Naive thymus-derived CD4-positive, alpha-beta T cell (primary cell): ENCODE measurements at regions of chr7 and their contacts with region 1.

Region 1: GRCh38 chr7:17234398-17235031 is 63.9 kb upstream of the AHR start:
- DNase-seq: peak in 8 of 9 donors; percentile 48 to 85 (median 69)
- ATAC-seq: peak; percentile 92
- H3K4me3 ChIP-seq: peak overlapping the region; percentile 47
- H3K4me3 Mint-ChIP-seq: peak overlapping the region; percentile 53 to 92 (median 76)
- H3K27ac ChIP-seq: peak overlapping the region; percentile 69
- H3K27ac Mint-ChIP-seq: peak overlapping the region; percentile 84 to 100 (median 96)
- H3K4me1 ChIP-seq: peaks cover 22 to 24% of the 10 kb centered on the region in 2 donors
- H3K4me1 Mint-ChIP-seq: peaks cover 19 to 50% (median 37%) of the 10 kb centered on the region in 7 donors
- H3K27me3 ChIP-seq: no peaks in the 10 kb centered on the region
- H3K27me3 Mint-ChIP-seq: peaks cover 0 to 4% (median 0%) of the 10 kb centered on the region in 5 donors

Region 2: DNA sequence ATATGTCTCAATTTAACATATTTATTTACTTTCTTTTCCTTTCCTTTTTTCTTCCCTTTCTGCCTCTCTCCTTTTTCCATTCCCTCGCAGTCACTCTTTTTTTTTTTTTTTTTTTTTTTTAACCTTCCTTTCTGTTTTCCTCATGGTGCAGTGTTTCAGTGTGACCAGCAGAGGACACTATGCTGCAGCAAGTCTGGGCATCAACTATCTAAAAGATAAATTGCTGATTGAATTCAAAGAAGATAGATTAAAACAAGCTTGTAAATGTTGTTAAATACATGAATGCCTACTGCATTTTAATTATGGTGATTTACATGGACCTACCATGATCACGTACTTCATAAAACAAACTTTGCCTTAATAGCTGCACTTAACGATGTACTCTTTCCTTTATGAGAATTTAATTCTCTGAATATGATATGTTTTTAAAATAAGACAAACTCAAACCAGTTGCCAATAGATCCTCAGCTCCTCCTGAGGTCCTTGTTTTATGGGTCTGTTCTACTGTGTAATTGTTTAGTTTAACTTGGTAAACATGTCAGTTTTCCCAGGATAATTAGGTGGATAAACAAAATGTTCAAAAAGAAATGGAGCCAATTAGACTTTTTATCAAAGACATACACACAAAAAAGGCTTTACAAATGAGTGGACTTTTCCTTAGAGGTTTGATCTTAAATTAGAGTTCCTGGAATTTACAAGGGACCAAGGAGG is 251.7 kb before region 1 on chr7:
- CTCF ChIA-PET with region 1: no interaction called
- POLR2A ChIA-PET with region 1: no interaction called
- intact Hi-C with region 1: loop called (anchors 1 to 2 kb)
- DNase-seq: peak in 6 of 9 donors; percentile 4 to 55 (median 34)
- ATAC-seq: peak; percentile 74
- H3K4me3 ChIP-seq: no peak overlapping the region
- H3K4me3 Mint-ChIP-seq: no peak overlapping the region
- H3K27ac ChIP-seq: no peak overlapping the region
- H3K27ac Mint-ChIP-seq: peak overlapping the region in 3 of 9 donors; percentile 1 to 51 (median 26)
- H3K4me1 ChIP-seq: no peaks in the 10 kb centered on the region
- H3K4me1 Mint-ChIP-seq: peaks cover 0 to 7% (median 4%) of the 10 kb centered on the region in 7 donors
- H3K27me3 ChIP-seq: peaks cover 0 to 5% of the 10 kb centered on the region in 2 donors
- H3K27me3 Mint-ChIP-seq: peaks cover 14 to 60% (median 25%) of the 10 kb centered on the region in 5 donors

Region 3: GRCh38 chr7:17021180-17021579 is 213.3 kb before region 1 on chr7:
- CTCF ChIA-PET with region 1: no interaction called
- POLR2A ChIA-PET with region 1: no interaction called
- intact Hi-C with region 1: no loop called
- DNase-seq: no peak
- ATAC-seq: no peak
- H3K4me3 ChIP-seq: no peak overlapping the region
- H3K4me3 Mint-ChIP-seq: no peak overlapping the region
- H3K27ac ChIP-seq: no peak overlapping the region
- H3K27ac Mint-ChIP-seq: no peak overlapping the region
- H3K4me1 ChIP-seq: no peaks in the 10 kb centered on the region
- H3K4me1 Mint-ChIP-seq: peaks cover 0 to 9% (median 0%) of the 10 kb centered on the region in 7 donors
- H3K27me3 ChIP-seq: no peaks in the 10 kb centered on the region
- H3K27me3 Mint-ChIP-seq: peaks cover 4 to 10% (median 6%) of the 10 kb centered on the region in 5 donors

Region 4: GRCh38 chr7:17041324-17041723 is 193.2 kb before region 1 on chr7:
- CTCF ChIA-PET with region 1: no interaction called
- POLR2A ChIA-PET with region 1: no interaction called
- intact Hi-C with region 1: loop called in 1 of 2 experiments (anchors 1 kb)
- DNase-seq: peak in 1 of 9 donors; percentile 36
- ATAC-seq: peak; percentile 77
- H3K4me3 ChIP-seq: no peak overlapping the region
- H3K4me3 Mint-ChIP-seq: peak overlapping the region in 2 of 10 donors; percentile 24 to 44
- H3K27ac ChIP-seq: no peak overlapping the region
- H3K27ac Mint-ChIP-seq: peak overlapping the region in 2 of 9 donors; percentile 50 to 75
- H3K4me1 ChIP-seq: no peaks in the 10 kb centered on the region
- H3K4me1 Mint-ChIP-seq: peaks cover 0 to 35% (median 7%) of the 10 kb centered on the region in 7 donors
- H3K27me3 ChIP-seq: no peaks in the 10 kb centered on the region
- H3K27me3 Mint-ChIP-seq: peaks cover 10 to 22% (median 16%) of the 10 kb centered on the region in 5 donors

Region 5: GRCh38 chr7:17159500-17160037 is 74.9 kb before region 1 on chr7:
- CTCF ChIA-PET with region 1: no interaction called
- POLR2A ChIA-PET with region 1: no interaction called
- intact Hi-C with region 1: loop called in 1 of 2 experiments (anchors 1 kb)
- DNase-seq: no peak
- ATAC-seq: no peak
- H3K4me3 ChIP-seq: no peak overlapping the region
- H3K4me3 Mint-ChIP-seq: peak overlapping the region in 1 of 10 donors; percentile 48
- H3K27ac ChIP-seq: no peak overlapping the region
- H3K27ac Mint-ChIP-seq: peak overlapping the region in 4 of 9 donors; percentile 25 to 80 (median 44)
- H3K4me1 ChIP-seq: no peaks in the 10 kb centered on the region
- H3K4me1 Mint-ChIP-seq: peaks cover 0 to 49% (median 7%) of the 10 kb centered on the region in 7 donors
- H3K27me3 ChIP-seq: no peaks in the 10 kb centered on the region
- H3K27me3 Mint-ChIP-seq: peaks cover 0 to 6% (median 0%) of the 10 kb centered on the region in 5 donors

Region 6: GRCh38 chr7:17205910-17206905 is 28.3 kb before region 1 on chr7:
- CTCF ChIA-PET with region 1: no interaction called
- POLR2A ChIA-PET with region 1: no interaction called
- intact Hi-C with region 1: loop called in 1 of 2 experiments (anchors 2 kb)
- DNase-seq: no peak
- ATAC-seq: peak; percentile 72
- H3K4me3 ChIP-seq: no peak overlapping the region
- H3K4me3 Mint-ChIP-seq: no peak overlapping the region
- H3K27ac ChIP-seq: no peak overlapping the region
- H3K27ac Mint-ChIP-seq: no peak overlapping the region
- H3K4me1 ChIP-seq: no peaks in the 10 kb centered on the region
- H3K4me1 Mint-ChIP-seq: peaks cover 0 to 3% (median 0%) of the 10 kb centered on the region in 7 donors
- H3K27me3 ChIP-seq: no peaks in the 10 kb centered on the region
- H3K27me3 Mint-ChIP-seq: peaks cover 0 to 3% (median 0%) of the 10 kb centered on the region in 5 donors

Region 7: DNA sequence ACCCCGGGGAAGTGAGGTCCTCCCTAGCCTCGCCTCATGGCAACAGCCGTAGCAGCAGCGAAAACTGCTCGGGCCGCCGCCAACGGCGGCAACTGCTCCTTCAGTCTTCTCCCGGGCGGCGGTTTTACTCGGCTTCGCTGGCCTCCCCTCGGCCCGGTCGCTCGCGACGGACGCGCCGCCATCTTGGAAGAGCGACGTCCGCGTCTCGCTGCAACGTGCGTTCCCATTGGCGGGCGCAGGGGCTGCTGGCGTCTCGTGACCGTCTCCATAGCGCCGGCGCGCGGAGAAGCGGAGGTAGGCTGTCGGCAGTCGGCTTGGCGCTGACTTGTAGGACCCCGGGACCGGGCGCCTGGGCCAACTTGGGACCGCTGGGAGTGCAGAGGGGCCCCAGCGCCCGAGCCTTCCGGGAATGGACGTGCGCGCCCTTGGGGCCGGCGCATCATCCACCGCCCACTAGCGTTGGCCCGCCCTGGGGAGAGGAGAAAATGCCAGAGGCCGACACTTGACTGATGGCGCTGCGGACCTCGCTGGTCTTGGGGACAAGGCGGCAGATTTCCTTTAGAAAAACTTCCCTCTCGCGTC is 705.9 kb after region 1 on chr7 and contains the start of gene SNX13:
- CTCF ChIA-PET with region 1: no interaction called
- POLR2A ChIA-PET with region 1: no interaction called
- intact Hi-C with region 1: loop called (anchors 2 to 5 kb)
- DNase-seq: peak; percentile 80 to 89 (median 86)
- ATAC-seq: peak; percentile 97
- H3K4me3 ChIP-seq: peak within 1 kb of the TSS; percentile 90
- H3K4me3 Mint-ChIP-seq: peak within 1 kb of the TSS; percentile 98 to 99 (median 99)
- H3K27ac ChIP-seq: peak within 1 kb of the TSS; percentile 95
- H3K27ac Mint-ChIP-seq: peak within 1 kb of the TSS; percentile 91 to 99 (median 98)
- H3K4me1 ChIP-seq: peaks cover 12 to 19% of the 10 kb centered on the region in 2 donors
- H3K4me1 Mint-ChIP-seq: peaks cover 35 to 57% (median 50%) of the 10 kb centered on the region in 7 donors
- H3K27me3 ChIP-seq: no peaks in the 10 kb centered on the region
- H3K27me3 Mint-ChIP-seq: peaks cover 0 to 19% (median 0%) of the 10 kb centered on the region in 5 donors
- total RNA-seq, gene SNX13: 23.8 to 40.9 (median 29.0) TPM